Activated T-helper 1 cell treated with anti-CD3 and anti-CD28 coated beads, Interleukin-12 subunit alpha, Interleukin-12 subunit beta, Interleukin-2, Interleukin-4 antibody, amounts not matched to agents 30 ng/mL and 10 ng/mL and 1 ng/mL, durations not matched to agents 14 hours and 24 hours and 36 hours (primary cell): ENCODE measurements at regions of chr1 and their contacts with region 1.

Region 1: GRCh38 chr1:54488779-54489626 is 59.0 kb upstream of the ACOT11 start:
- DNase-seq: peak; percentile 71
- H3K4me3 Mint-ChIP-seq: peak overlapping the region; percentile 86
- H3K27ac Mint-ChIP-seq: peak overlapping the region; percentile 82
- H3K4me1 Mint-ChIP-seq: peaks cover 36% of the 10 kb centered on the region
- H3K27me3 Mint-ChIP-seq: peaks cover 35% of the 10 kb centered on the region

Region 2: DNA sequence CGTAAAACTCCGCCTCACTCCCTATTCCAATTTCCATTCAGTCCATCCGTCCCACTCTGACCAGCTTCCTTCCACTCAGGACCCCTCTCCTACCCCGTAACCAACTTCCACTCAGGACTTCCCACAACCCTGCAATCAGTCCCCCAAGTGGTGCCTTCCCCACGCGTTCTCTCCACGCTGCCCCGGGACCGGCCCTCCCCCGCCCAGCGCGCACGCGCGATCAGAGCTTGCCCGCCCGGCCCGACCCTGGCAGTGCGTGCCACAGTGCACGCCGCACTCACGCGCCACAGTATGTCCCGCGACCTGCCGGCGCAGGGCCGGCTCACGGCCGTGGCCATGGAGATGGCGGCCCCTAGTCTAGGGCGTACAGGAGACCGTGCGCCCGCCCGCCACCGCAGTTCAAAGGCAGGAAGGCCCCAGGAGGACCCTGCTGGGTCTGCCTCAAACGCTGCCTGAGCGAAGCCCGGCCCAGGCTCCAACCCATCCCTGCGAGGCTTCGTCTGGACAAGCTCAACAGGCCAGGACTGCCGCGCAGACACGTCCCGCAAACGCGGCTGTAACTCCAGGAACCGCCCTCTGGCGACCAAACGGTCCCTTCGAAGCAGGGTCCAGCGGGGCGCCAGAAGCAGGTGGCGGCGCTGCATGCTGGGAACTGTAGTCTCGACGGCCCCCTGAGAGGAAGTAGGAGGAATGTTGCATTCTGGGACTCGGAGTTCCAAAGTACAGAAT is 650.9 kb before region 1 on chr1 and contains the start of gene NDC1:
- intact Hi-C with region 1: loop called (anchors 2 kb)
- DNase-seq: peak; percentile 86
- H3K4me3 Mint-ChIP-seq: peak within 1 kb of the TSS; percentile 100
- H3K27ac Mint-ChIP-seq: peak within 1 kb of the TSS; percentile 98
- H3K4me1 Mint-ChIP-seq: peaks cover 26% of the 10 kb centered on the region
- H3K27me3 Mint-ChIP-seq: peaks cover 4% of the 10 kb centered on the region
- total RNA-seq, gene NDC1: 33.2 and 38.2 TPM in 2 replicates

Region 3: DNA sequence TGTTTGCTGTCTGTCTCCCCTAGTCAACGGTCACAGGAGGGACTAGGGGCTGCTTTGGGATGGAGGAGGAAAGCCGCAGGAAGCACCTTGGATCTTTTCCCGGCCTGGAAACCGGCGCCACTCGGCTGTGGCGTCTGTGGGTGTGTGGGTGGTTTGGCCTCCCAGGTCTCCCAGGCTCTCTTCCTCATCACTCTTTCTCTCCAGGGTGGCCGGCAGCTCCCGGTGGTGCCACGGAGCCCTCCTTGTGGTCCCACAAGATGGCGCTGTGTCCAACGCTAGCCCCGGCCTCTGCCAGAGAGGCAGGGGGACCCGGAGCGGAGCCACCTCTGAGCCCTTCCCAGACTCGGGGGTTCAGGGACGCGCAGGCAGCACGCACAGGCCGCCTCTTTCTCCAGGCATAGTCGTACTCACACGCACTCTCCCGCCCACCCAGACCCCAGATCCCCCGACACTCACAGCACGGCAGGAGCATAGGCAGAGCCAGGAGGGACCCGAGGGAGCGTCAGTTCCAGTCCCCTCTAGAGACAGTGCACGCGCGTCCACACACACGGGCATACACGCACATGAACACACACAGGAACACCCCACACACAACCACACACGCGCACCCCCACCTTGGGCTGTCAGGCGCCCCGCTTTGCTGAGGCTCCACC is 367.4 kb before region 1 on chr1:
- intact Hi-C with region 1: loop called (anchors 1 kb)
- DNase-seq: peak; percentile 49
- H3K4me3 Mint-ChIP-seq: no peak overlapping the region
- H3K27ac Mint-ChIP-seq: no peak overlapping the region
- H3K4me1 Mint-ChIP-seq: no peaks in the 10 kb centered on the region
- H3K27me3 Mint-ChIP-seq: peaks cover 11% of the 10 kb centered on the region

Region 4: GRCh38 chr1:54230507-54231339 is 258.3 kb before region 1 on chr1:
- intact Hi-C with region 1: loop called (anchors 1 kb)
- DNase-seq: no peak
- H3K4me3 Mint-ChIP-seq: no peak overlapping the region
- H3K27ac Mint-ChIP-seq: peak overlapping the region; percentile 86
- H3K4me1 Mint-ChIP-seq: peaks cover 27% of the 10 kb centered on the region
- H3K27me3 Mint-ChIP-seq: no peaks in the 10 kb centered on the region

Region 5: DNA sequence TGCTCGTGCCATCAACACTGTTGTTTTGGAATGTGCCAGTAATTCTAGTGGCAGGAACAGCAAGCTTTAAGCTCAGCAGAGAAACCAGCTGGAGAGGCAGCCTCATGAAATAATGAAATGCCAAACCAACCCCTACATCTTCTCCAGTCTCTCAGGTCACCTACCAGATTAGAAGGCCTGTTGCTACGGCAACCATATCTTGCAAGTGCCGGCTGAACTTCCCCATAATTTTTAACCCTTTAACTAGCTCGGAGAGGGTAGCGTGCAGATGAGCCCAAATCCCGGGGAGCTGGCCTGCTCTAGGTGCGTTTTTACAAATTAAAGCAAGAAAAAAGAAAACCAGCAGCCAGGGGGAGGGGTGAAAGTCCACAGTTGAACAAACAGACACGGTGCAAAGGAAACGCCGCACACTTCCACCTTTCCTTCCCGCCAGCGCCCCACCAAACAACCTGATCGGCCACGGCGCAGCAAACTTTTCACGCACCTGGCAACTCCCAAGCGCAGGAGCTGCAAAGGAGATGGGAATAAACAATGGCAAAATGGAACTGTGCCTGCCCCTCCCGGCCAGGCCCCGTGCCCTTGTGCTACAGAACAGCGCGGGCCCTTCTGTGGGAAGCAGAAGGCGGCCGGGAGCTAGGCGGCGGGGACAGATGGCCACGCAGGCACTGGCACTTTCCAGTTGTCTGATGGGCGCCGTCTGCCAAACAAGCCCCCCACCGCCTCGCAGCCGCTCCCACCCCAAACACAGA is 132.9 kb before region 1 on chr1:
- intact Hi-C with region 1: loop called (anchors 1 kb)
- DNase-seq: no peak
- H3K4me3 Mint-ChIP-seq: peak overlapping the region; percentile 87
- H3K27ac Mint-ChIP-seq: peak overlapping the region; percentile 94
- H3K4me1 Mint-ChIP-seq: peaks cover 91% of the 10 kb centered on the region
- H3K27me3 Mint-ChIP-seq: no peaks in the 10 kb centered on the region

Region 6: DNA sequence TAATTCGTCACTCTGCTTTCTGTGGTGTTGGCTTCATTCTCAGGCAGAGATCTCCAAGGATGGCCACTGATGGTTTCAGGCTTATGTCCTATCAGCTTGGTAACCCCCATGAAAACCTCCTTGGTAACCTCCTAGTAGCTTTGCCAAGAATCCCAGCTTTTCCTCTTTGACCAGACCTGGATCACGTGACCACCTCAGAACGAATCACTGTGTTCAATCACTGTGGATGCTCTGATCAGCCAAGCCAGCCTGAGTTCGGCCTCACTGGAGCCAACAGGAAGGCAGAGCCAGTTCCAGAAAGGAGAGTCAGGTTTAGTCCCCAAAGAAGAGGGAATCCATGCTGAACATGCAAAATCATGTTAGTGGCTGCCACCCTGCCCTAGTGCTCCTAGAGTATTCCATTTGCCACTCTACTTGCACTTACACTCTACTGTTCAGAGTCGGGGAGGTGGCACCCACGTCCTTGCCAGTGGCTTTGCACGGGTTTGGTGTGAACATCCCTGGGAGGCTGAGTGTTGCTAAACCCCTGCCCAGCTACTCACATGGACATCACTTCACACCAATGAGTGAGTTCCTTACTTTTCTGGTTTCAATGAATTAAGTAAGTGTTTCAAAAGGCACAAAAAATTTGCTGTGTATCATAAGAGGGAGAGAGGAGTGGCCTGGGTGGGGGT is 49.3 kb before region 1 on chr1:
- intact Hi-C with region 1: no loop called
- DNase-seq: no peak
- H3K4me3 Mint-ChIP-seq: no peak overlapping the region
- H3K27ac Mint-ChIP-seq: no peak overlapping the region
- H3K4me1 Mint-ChIP-seq: no peaks in the 10 kb centered on the region
- H3K27me3 Mint-ChIP-seq: peaks cover 4% of the 10 kb centered on the region

Region 7: GRCh38 chr1:54764133-54764921 is 275.3 kb after region 1 on chr1 and contains the start of gene PARS2:
- intact Hi-C with region 1: loop called (anchors 5 kb)
- DNase-seq: peak; percentile 94
- H3K4me3 Mint-ChIP-seq: peak within 1 kb of the TSS; percentile 90
- H3K27ac Mint-ChIP-seq: peak within 1 kb of the TSS; percentile 95
- H3K4me1 Mint-ChIP-seq: peaks cover 32% of the 10 kb centered on the region
- H3K27me3 Mint-ChIP-seq: no peaks in the 10 kb centered on the region
- total RNA-seq, gene PARS2: 5.9 and 6.7 TPM in 2 replicates